ENCODE measurements at regions of chr6 and their contacts with region 1.

Region 1: DNA sequence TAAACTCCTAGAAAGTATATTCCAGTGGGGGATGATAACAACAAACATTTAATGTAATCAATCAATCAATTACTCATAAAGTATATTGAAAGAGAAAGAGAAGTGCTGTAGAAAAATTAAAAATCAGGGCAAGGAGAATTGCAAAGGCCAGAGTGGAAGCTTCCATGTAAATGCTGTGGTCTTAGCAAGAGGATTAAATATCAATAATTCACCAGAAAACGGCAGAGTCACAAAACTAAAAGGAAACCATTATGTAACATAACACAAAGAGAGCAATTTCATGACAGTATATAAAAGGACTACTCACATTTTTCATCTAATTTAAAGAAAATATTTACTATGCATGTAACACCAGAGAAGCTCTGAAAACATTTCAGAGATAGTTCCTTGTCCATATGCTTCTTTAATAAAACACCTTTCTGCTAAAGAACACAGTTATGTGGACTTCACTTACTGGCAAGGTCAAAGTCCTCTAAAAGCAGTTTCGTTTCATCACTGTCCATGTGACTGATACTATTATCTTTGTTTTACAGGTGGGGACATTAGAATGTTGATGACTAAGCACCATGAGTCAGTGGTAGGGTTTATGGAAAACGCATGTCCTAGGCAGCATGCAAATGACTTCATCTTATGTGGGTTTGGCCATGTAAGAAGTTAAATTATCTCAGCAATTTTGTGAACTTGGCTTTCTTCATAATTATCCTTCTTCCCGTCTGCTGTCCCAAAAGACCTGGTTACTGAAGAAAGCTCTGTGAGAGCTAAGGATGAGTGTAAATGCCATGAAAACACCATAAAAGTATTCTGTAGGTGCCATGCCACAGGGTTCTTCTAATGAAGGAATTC is 185.8 kb upstream of the TENT5A start:
- DNase-seq: peak; percentile 94
- ATAC-seq: peak; percentile 73
- H3K4me3 ChIP-seq: peak overlapping the region; percentile 51
- H3K27ac ChIP-seq: peak overlapping the region; percentile 99
- H3K4me1 ChIP-seq: peaks cover 62% of the 10 kb centered on the region
- H3K27me3 ChIP-seq: no peaks in the 10 kb centered on the region
- CTCF ChIP-seq: no peak

Region 2: GRCh38 chr6:81766482-81767069 is 171.7 kb before region 1 on chr6:
- CTCF ChIA-PET with region 1: no interaction called
- POLR2A ChIA-PET with region 1: no interaction called
- intact Hi-C with region 1: loop called (anchors 2 kb)
- DNase-seq: peak; percentile 82
- ATAC-seq: peak; percentile 25
- H3K4me3 ChIP-seq: peak overlapping the region; percentile 30
- H3K27ac ChIP-seq: peak overlapping the region; percentile 78
- H3K4me1 ChIP-seq: peaks cover 54% of the 10 kb centered on the region
- H3K27me3 ChIP-seq: no peaks in the 10 kb centered on the region
- CTCF ChIP-seq: no peak

Region 3: DNA sequence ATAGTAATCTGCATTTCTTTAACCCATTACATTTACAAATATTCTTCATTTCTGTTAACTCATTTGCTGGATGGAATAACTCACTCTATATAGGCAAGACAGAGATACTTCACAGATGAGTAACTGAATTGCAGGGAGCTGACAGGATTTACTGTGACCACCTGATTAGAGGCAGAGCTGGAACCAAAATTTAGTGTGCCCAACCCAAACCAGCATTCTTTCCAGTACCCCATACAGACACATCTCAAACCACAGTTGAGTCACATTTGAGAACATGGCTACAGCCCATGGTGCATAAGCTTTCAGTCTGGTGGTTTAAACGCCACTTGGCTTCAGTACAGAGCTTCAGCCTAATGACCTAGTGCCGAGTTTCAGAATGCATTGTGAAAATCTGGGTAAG is 47.4 kb before region 1 on chr6:
- CTCF ChIA-PET with region 1: no interaction called
- POLR2A ChIA-PET with region 1: no interaction called
- intact Hi-C with region 1: no loop called
- DNase-seq: no peak
- ATAC-seq: no peak
- H3K4me3 ChIP-seq: no peak overlapping the region
- H3K27ac ChIP-seq: no peak overlapping the region
- H3K4me1 ChIP-seq: peaks cover 9% of the 10 kb centered on the region
- H3K27me3 ChIP-seq: no peaks in the 10 kb centered on the region
- CTCF ChIP-seq: no peak

Region 4: GRCh38 chr6:81997091-81997926 is 59.1 kb after region 1 on chr6:
- CTCF ChIA-PET with region 1: no interaction called
- POLR2A ChIA-PET with region 1: no interaction called
- intact Hi-C with region 1: loop called (anchors 2 kb)
- DNase-seq: peak; percentile 86
- ATAC-seq: peak; percentile 62
- H3K4me3 ChIP-seq: peak overlapping the region; percentile 49
- H3K27ac ChIP-seq: peak overlapping the region; percentile 99
- H3K4me1 ChIP-seq: peaks cover 41% of the 10 kb centered on the region
- H3K27me3 ChIP-seq: no peaks in the 10 kb centered on the region
- CTCF ChIP-seq: no peak

Region 5: GRCh38 chr6:82057846-82058554 is 119.8 kb after region 1 on chr6:
- CTCF ChIA-PET with region 1: no interaction called
- POLR2A ChIA-PET with region 1: no interaction called
- intact Hi-C with region 1: no loop called
- DNase-seq: no peak
- ATAC-seq: no peak
- H3K4me3 ChIP-seq: no peak overlapping the region
- H3K27ac ChIP-seq: no peak overlapping the region
- H3K4me1 ChIP-seq: no peaks in the 10 kb centered on the region
- H3K27me3 ChIP-seq: no peaks in the 10 kb centered on the region
- CTCF ChIP-seq: no peak